Gastrocnemius medialis (tissue), 4 donors: ENCODE measurements at regions of chr11 and their contacts with region 1.

Region 1: GRCh38 chr11:65512306-65512705 is 12.6 kb upstream of the SCYL1 start:
- DNase-seq: no peak
- ATAC-seq: no peak
- H3K4me3 ChIP-seq: no peak overlapping the region
- H3K27ac ChIP-seq: no peak overlapping the region
- H3K4me1 ChIP-seq: peaks cover 9 to 17% of the 10 kb centered on the region in 2 donors
- H3K27me3 ChIP-seq: no peaks in the 10 kb centered on the region
- CTCF ChIP-seq: no peak
- POLR2A ChIP-seq: no peak

Region 2: DNA sequence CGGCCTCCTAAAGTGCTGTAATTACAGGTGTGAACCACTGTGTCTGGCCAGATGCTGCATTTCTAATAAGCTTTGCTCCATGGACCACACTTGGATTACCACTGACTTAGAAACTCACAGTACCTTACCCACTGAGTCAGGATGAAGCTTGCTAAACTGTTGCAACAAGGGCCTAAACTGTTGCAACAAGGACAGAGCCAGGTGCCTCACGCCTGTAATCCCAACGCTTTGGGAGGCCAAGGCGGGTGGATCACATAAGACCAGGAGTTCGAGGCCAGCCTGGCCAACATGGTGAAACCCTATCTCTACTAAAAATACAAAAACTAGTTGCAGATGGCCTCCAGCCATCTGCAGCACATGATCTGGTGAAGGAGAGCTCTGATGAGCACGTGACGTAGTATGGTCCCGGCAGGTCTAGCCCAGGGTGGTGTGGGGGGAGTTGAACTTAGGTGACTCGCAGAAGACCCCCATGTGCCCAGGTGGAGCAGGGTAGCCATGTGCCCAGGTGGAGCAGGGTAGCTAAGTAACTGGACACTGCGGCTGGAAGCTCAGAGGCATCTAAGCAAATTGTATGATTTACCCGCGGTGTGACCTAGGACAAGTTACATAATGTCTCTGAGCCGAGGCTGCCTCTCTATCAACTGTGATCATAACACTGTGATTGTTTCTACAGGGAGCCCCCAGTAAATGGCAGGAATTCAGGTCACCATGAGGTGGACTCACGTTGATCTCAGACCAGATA is 138.3 kb before region 1 on chr11:
- in situ Hi-C with region 1: loop called in 3 of 4 experiments (anchors 5 kb)
- intact Hi-C with region 1: no loop called
- DNase-seq: peak in 1 of 2 donors; percentile 67
- ATAC-seq: peak; percentile 22 to 23
- H3K4me3 ChIP-seq: no peak overlapping the region
- H3K27ac ChIP-seq: peak overlapping the region; percentile 88 to 94 (median 91)
- H3K4me1 ChIP-seq: peaks cover 48 to 51% of the 10 kb centered on the region in 2 donors
- H3K27me3 ChIP-seq: no peaks in the 10 kb centered on the region
- CTCF ChIP-seq: no peak
- POLR2A ChIP-seq: no peak